Tibial artery (tissue), 4 donors: ENCODE measurements at regions of chr3 and their contacts with region 1.

Region 1: GRCh38 chr3:83457551-83457950 is 1501.2 kb upstream of the CADM2 start:
- DNase-seq: no peak
- H3K4me3 ChIP-seq: no peak overlapping the region
- H3K27ac ChIP-seq: no peak overlapping the region
- H3K4me1 ChIP-seq: peaks cover 0 to 25% (median 0%) of the 10 kb centered on the region in 4 donors
- H3K27me3 ChIP-seq: no peaks in the 10 kb centered on the region
- CTCF ChIP-seq: no peak

Region 2: DNA sequence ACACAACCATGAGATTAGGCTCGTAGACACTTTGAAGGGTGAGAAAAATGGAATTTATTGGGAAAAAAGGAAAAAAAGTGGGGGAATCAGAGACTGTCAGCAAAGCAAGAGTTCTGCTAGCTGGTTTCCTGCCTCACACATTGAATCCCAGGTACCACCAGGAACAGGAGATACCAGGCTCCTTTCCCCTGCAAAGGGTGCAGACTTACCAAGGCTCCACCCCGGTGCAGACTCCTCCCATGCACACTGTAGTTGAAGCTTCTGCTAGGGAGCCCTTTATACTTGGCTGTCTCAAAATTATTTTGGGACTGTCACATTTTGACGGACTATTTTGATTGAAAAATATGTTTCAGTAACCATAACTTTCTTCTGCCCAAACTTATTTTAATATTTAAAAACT is 876.2 kb before region 1 on chr3:
- intact Hi-C with region 1: loop called (anchors 5 kb)
- DNase-seq: no peak
- H3K4me3 ChIP-seq: no peak overlapping the region
- H3K27ac ChIP-seq: no peak overlapping the region
- H3K4me1 ChIP-seq: no peaks in the 10 kb centered on the region
- H3K27me3 ChIP-seq: no peaks in the 10 kb centered on the region
- CTCF ChIP-seq: no peak

Region 3: GRCh38 chr3:83403927-83404326 is 53.6 kb before region 1 on chr3:
- intact Hi-C with region 1: no loop called
- DNase-seq: no peak
- H3K4me3 ChIP-seq: no peak overlapping the region
- H3K27ac ChIP-seq: no peak overlapping the region
- H3K4me1 ChIP-seq: no peaks in the 10 kb centered on the region
- H3K27me3 ChIP-seq: no peaks in the 10 kb centered on the region
- CTCF ChIP-seq: no peak